CD8-positive, alpha-beta memory T cell (primary cell): ENCODE measurements at regions of chr11 and their contacts with region 1.

Region 1: GRCh38 chr11:115324581-115325432 is 179.4 kb downstream of the CADM1 start:
- DNase-seq: peak in 4 of 5 donors; percentile 1 to 48 (median 22)
- H3K4me3 ChIP-seq: no peak overlapping the region
- H3K4me3 Mint-ChIP-seq: peak overlapping the region in 3 of 7 donors; percentile 13 to 31 (median 17)
- H3K27ac ChIP-seq: no peak overlapping the region
- H3K27ac Mint-ChIP-seq: peak overlapping the region in 2 of 8 donors; percentile 40 to 82
- H3K4me1 ChIP-seq: no peaks in the 10 kb centered on the region
- H3K4me1 Mint-ChIP-seq: peaks cover 6 to 10% (median 9%) of the 10 kb centered on the region in 3 donors
- H3K27me3 ChIP-seq: no peaks in the 10 kb centered on the region
- H3K27me3 Mint-ChIP-seq: no peaks in the 10 kb centered on the region

Region 2: DNA sequence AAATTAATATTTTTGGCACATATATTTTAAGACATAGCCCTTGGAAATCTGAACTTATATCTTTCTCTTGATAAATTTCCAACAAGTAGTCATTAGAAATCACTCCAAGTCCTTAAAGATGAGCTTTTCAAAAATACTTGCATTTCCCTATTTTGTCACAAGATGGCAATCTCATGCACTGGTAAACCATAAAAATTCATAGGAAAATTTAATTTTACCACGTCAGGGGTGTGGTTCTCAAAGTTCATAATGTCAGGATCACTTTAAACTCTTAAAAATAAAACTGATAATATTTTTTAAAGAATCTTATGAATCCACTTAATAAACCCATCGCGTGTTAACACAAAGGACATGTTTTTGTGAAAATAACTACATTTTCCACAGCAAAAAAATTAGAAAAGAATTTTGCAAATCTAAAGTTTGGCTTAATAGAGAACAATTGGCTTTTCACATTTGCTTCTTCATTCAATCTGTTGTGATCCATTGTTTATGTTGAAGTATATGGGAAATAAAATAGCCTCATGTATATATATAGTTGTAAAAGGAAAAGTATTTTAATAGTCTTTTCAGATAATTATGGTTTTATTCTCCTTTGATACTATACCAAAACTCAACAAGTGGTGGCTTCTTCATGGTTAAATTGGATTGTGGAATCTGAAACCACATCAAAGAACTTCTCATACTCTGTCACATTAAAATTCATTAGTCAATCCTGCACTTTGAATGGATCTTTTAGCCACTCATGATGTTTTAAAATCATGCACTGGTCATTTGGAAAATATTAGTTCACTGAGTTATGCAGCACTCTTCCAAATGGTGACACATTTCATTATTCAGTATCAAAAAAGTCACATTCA is 10.4 kb after region 1 on chr11:
- CTCF ChIA-PET with region 1: interaction called, 10 read pairs
- POLR2A ChIA-PET with region 1: no interaction called
- DNase-seq: no peak
- H3K4me3 ChIP-seq: no peak overlapping the region
- H3K4me3 Mint-ChIP-seq: no peak overlapping the region
- H3K27ac ChIP-seq: no peak overlapping the region
- H3K27ac Mint-ChIP-seq: no peak overlapping the region
- H3K4me1 ChIP-seq: no peaks in the 10 kb centered on the region
- H3K4me1 Mint-ChIP-seq: no peaks in the 10 kb centered on the region
- H3K27me3 ChIP-seq: no peaks in the 10 kb centered on the region
- H3K27me3 Mint-ChIP-seq: peaks cover 0 to 2% of the 10 kb centered on the region in 2 donors